G401 (cell line): ENCODE measurements at regions of chr17 and their contacts with region 1.

Region 1: DNA sequence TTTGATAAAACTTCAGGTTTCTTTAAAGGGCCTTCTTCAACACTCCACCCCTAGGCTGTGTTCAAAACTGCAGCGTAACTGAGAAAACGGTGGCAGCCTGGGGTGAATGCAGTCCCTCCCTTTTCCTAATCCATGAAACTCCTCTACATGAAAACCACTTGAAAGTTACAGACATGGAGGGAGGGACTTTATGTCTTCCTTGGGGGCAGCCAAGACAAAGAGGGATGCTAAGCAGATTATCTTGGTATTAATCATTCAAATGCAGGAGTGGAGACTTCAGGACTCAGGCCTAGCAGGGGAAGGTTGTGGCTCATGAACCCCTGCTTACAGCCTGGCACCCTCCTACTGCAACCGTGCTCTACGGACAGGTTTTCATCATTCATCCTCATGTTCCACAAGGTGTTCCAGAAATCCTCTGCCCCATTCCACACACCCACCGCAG is 46.8 kb downstream of the RNF112 start:
- DNase-seq: no peak

Region 2: DNA sequence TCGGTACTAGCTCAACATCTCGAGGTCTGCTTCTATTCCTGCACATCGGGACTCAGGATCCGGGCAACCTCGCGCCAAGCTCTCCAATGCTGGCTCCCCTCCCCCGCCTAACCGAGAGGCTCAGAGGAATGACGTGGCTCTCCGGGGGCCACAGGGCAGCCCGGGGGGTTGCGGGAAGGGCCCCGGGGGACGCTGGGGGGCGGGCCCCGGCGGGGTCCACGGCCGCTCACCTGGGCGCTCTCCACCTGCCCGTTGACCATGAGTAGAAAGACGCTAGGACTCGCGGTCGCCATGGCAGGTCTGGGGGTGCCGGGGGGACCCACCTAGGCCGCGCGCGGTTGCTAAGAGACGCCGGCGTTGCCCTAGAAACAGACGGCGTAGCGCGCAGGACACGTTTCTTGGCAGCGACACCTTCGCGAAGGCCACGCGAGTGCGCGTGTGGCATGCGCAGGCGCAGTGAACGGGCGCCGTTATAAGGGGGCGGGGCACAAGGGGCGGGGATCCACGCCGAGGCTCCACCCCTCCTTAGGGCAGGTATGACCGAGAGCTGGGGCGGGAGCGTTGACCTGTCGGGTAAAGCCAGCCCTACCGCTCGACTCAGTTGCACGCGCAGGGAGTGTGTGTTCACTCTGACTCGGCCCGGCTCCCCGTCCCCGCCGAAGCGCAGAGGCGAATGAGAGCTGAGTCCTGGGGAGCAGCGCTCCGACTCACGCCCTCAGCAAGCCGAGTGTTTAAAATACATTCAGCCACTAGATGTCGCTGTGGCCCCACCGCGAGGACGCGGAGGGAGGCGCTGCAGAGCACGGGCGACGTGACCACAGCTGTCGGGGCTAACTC is 95.4 kb before region 1 on chr17 and contains the start of gene B9D1:
- in situ Hi-C with region 1: loop called (anchors 5 kb)
- DNase-seq: peak; percentile 95
- total RNA-seq, gene B9D1: 50.5 and 94.6 TPM in 2 replicates